ENCODE measurements at regions of chr5 and their contacts with region 1.

Region 1: GRCh38 chr5:59390074-59390659 is 503.4 kb downstream of the PDE4D start:
- DNase-seq: peak in 1 of 2 experiments; percentile 33
- H3K4me3 ChIP-seq: no peak overlapping the region
- H3K4me3 Mint-ChIP-seq: no peak overlapping the region
- H3K27ac Mint-ChIP-seq: peak overlapping the region; percentile 19
- H3K4me1 ChIP-seq: no peaks in the 10 kb centered on the region
- H3K4me1 Mint-ChIP-seq: peaks cover 13% of the 10 kb centered on the region
- H3K27me3 ChIP-seq: no peaks in the 10 kb centered on the region
- H3K27me3 Mint-ChIP-seq: no peaks in the 10 kb centered on the region
- CTCF ChIP-seq: peak; percentile 48 to 63

Region 2: DNA sequence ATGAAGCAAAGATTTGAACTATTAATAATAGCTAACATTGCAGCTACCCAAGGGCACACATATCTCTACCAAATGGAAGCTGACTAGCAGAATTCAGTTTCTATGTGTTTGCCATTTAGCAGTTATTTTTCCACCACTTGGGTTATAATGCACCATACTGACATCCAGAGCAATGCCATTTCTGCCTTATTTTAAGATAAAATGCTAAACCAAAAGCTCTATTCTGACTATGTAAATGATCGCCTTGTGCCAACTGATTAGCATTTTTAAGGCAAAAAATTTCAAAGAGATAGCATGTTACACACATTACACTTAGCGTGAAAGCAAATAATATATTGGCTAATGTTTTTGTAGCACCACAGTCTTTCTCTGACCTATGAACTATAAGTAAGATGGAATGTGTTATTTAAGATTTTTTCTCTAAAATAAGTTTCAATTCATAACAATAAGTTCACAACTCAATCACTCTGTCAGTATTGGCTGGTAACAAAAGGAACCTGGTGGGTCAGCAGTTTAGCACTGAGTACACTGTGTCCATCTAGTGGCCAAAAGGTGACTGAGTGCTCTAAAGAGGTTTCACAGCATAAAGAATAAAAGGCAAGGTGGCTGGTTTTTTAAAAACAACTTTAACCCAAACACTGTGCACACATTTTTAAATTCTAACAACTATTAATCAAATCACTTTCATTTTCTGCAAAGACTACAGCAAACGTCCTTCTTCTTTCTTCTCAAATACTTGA is 59.9 kb after region 1 on chr5:
- CTCF ChIA-PET with region 1: no interaction called
- POLR2A ChIA-PET with region 1: no interaction called
- intact Hi-C with region 1: loop called (anchors 1 kb)
- DNase-seq: no peak
- H3K4me3 ChIP-seq: no peak overlapping the region
- H3K4me3 Mint-ChIP-seq: no peak overlapping the region
- H3K27ac Mint-ChIP-seq: no peak overlapping the region
- H3K4me1 ChIP-seq: no peaks in the 10 kb centered on the region
- H3K4me1 Mint-ChIP-seq: no peaks in the 10 kb centered on the region
- H3K27me3 ChIP-seq: no peaks in the 10 kb centered on the region
- H3K27me3 Mint-ChIP-seq: no peaks in the 10 kb centered on the region
- CTCF ChIP-seq: no peak

Region 3: DNA sequence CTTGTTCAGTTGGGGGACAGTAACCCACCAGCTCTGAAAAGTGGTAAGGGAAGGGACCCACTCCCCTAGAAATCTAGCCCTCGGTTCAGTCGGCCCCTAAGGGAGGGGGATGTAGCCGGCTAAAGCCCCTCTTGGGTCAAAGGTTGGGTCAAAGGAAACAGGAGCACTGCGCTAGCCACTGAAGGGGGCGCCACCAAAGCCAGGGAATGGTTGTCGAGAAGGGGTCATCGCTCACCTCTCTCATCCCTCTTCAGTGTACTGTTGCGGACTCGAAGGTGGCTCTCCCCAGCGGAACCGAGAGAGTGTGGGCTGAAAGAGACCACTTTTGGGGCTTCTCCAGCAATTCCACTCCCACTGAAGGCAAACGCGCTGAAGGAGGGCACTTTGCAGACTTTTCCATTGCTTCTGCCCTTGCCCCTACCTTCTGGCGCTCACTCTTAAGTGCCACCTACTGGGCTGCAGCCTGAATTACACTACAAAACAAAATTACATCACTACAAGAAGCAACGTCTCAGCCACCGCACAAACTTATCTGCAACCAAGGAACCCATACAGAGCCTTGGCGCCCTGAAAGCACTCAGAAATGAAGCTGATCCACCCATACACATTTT is 106.5 kb after region 1 on chr5:
- CTCF ChIA-PET with region 1: no interaction called
- POLR2A ChIA-PET with region 1: no interaction called
- intact Hi-C with region 1: loop called (anchors 1 kb)
- DNase-seq: peak; percentile 36 to 40
- H3K4me3 ChIP-seq: no peak overlapping the region
- H3K4me3 Mint-ChIP-seq: no peak overlapping the region
- H3K27ac Mint-ChIP-seq: no peak overlapping the region
- H3K4me1 ChIP-seq: no peaks in the 10 kb centered on the region
- H3K4me1 Mint-ChIP-seq: no peaks in the 10 kb centered on the region
- H3K27me3 ChIP-seq: no peaks in the 10 kb centered on the region
- H3K27me3 Mint-ChIP-seq: peaks cover 3% of the 10 kb centered on the region
- CTCF ChIP-seq: peak; percentile 32 to 72

Region 4: GRCh38 chr5:59587489-59588337 is 197.5 kb after region 1 on chr5:
- CTCF ChIA-PET with region 1: no interaction called
- POLR2A ChIA-PET with region 1: no interaction called
- intact Hi-C with region 1: loop called (anchors 5 kb)
- DNase-seq: peak; percentile 71 to 76
- H3K4me3 ChIP-seq: peak overlapping the region; percentile 27
- H3K4me3 Mint-ChIP-seq: peak overlapping the region; percentile 73
- H3K27ac Mint-ChIP-seq: peak overlapping the region; percentile 8
- H3K4me1 ChIP-seq: peaks cover 29% of the 10 kb centered on the region
- H3K4me1 Mint-ChIP-seq: peaks cover 15% of the 10 kb centered on the region
- H3K27me3 ChIP-seq: no peaks in the 10 kb centered on the region
- H3K27me3 Mint-ChIP-seq: no peaks in the 10 kb centered on the region
- CTCF ChIP-seq: peak; percentile 21 to 57

Region 5: DNA sequence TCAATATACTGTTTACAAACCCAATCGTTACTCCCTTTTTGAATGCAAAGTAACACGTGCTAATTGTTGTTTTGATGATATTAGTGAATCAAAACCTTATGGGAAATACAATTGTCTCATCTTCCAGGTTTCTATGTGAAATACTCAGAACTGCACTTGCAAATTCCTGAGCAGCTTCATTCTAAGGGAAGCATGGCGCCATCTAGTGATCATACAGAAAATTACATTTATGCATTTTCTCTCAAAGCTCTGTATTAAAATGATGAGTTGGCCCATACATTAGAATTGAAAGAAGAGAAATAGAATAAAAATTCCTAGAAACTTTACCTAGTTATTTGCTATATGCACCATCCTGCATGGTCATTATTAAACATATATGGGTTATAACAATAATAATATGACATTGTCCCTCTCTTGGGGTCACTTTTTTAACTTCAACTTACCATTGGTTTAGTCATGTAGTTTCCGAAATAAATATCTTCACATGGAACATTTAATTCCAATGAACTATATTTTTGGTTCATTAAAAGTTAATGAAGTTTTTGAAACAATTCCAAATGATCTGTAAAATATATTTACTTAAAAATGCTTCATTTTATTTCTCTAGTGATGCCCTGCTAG is 283.4 kb after region 1 on chr5:
- CTCF ChIA-PET with region 1: no interaction called
- POLR2A ChIA-PET with region 1: no interaction called
- intact Hi-C with region 1: loop called (anchors 1 kb)
- DNase-seq: peak in 1 of 2 experiments; percentile 52
- H3K4me3 ChIP-seq: no peak overlapping the region
- H3K4me3 Mint-ChIP-seq: no peak overlapping the region
- H3K27ac Mint-ChIP-seq: no peak overlapping the region
- H3K4me1 ChIP-seq: no peaks in the 10 kb centered on the region
- H3K4me1 Mint-ChIP-seq: no peaks in the 10 kb centered on the region
- H3K27me3 ChIP-seq: no peaks in the 10 kb centered on the region
- H3K27me3 Mint-ChIP-seq: peaks cover 2% of the 10 kb centered on the region
- CTCF ChIP-seq: peak; percentile 75 to 84

Region 6: GRCh38 chr5:59724482-59725391 is 334.6 kb after region 1 on chr5:
- CTCF ChIA-PET with region 1: no interaction called
- POLR2A ChIA-PET with region 1: no interaction called
- intact Hi-C with region 1: loop called (anchors 5 kb)
- DNase-seq: peak; percentile 48 to 64
- H3K4me3 ChIP-seq: no peak overlapping the region
- H3K4me3 Mint-ChIP-seq: no peak overlapping the region
- H3K27ac Mint-ChIP-seq: no peak overlapping the region
- H3K4me1 ChIP-seq: no peaks in the 10 kb centered on the region
- H3K4me1 Mint-ChIP-seq: no peaks in the 10 kb centered on the region
- H3K27me3 ChIP-seq: no peaks in the 10 kb centered on the region
- H3K27me3 Mint-ChIP-seq: peaks cover 3% of the 10 kb centered on the region
- CTCF ChIP-seq: peak; percentile 72 to 83